ENCODE measurements at regions of chr15 and their contacts with region 1.

Region 1: DNA sequence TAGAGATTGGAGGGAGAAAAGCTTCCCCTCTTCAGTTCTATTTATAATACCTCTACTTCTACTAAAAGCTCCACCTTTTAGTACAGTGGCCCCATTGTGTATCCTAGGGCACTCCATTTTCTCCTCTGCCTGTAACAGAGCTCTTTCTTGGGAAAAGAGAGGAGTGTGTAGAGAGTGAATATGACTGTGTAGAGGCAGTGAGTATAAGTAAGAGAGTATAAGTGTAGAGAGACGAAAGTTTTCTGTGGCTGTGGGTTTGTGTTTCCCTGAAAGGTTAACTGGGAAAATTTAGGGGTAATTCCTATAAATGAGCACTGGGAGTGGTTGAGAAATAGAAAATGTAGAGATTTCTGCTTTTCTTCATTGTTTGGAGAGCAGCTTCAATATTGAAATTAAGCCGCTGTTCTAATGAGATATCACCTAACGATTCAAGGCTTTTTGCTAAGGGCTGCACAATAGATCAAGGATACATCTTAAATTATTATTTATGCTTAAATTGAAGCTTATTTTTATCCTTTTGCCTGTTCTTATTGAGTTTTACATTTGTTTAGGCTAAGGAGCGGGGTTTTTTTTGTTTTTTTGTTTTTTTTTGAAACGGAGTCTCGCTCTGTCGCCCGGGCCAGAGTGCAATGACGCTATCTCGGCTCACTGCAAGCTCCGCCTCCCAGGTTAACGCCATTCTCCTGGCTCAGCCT is 6.9 kb downstream of the IQGAP1 start:
- DNase-seq: no peak
- H3K4me3 ChIP-seq: peak overlapping the region in 1 of 59 donors; percentile 4
- H3K27ac ChIP-seq: peak overlapping the region in 42 of 59 donors; percentile 5 to 74 (median 50)
- H3K27me3 ChIP-seq: no peaks in the 10 kb centered on the region
- CTCF ChIP-seq: no peak

Region 2: GRCh38 chr15:90352109-90352893 is 42.6 kb before region 1 on chr15 and contains the start of gene ZNF774:
- intact Hi-C with region 1: loop called in 1 of 2 experiments (anchors 5 kb)
- DNase-seq: peak; percentile 71 to 93 (median 90)
- H3K4me3 ChIP-seq: peak within 1 kb of the TSS; percentile 59 to 100 (median 90)
- H3K27ac ChIP-seq: peak within 1 kb of the TSS in 46 of 59 donors; percentile 5 to 91 (median 66)
- H3K27me3 ChIP-seq: no peaks in the 10 kb centered on the region
- CTCF ChIP-seq: peak in 15 of 56 donors; percentile 8 to 46 (median 22)
- total RNA-seq, gene ZNF774: 10.6 to 38.4 (median 20.8) TPM

Region 3: GRCh38 chr15:90451053-90451850 is 56.4 kb after region 1 on chr15:
- intact Hi-C with region 1: loop called in 1 of 2 experiments (anchors 10 kb)
- DNase-seq: no peak
- H3K4me3 ChIP-seq: no peak overlapping the region
- H3K27ac ChIP-seq: peak overlapping the region in 57 of 59 donors; percentile 11 to 100 (median 78)
- H3K27me3 ChIP-seq: no peaks in the 10 kb centered on the region
- CTCF ChIP-seq: no peak

Region 4: GRCh38 chr15:90465140-90465922 is 70.4 kb after region 1 on chr15:
- intact Hi-C with region 1: no loop called
- DNase-seq: no peak
- H3K4me3 ChIP-seq: no peak overlapping the region
- H3K27ac ChIP-seq: peak overlapping the region; percentile 89 to 100 (median 97)
- H3K27me3 ChIP-seq: no peaks in the 10 kb centered on the region
- CTCF ChIP-seq: no peak